ENCODE measurements at regions of chr1 and their contacts with region 1.

Region 1: GRCh38 chr1:167273027-167273800 is 52.5 kb downstream of the POU2F1 start:
- H3K4me3 Mint-ChIP-seq: no peak overlapping the region
- H3K27ac Mint-ChIP-seq: no peak overlapping the region
- H3K4me1 Mint-ChIP-seq: peaks cover 63% of the 10 kb centered on the region
- H3K27me3 Mint-ChIP-seq: no peaks in the 10 kb centered on the region

Region 2: DNA sequence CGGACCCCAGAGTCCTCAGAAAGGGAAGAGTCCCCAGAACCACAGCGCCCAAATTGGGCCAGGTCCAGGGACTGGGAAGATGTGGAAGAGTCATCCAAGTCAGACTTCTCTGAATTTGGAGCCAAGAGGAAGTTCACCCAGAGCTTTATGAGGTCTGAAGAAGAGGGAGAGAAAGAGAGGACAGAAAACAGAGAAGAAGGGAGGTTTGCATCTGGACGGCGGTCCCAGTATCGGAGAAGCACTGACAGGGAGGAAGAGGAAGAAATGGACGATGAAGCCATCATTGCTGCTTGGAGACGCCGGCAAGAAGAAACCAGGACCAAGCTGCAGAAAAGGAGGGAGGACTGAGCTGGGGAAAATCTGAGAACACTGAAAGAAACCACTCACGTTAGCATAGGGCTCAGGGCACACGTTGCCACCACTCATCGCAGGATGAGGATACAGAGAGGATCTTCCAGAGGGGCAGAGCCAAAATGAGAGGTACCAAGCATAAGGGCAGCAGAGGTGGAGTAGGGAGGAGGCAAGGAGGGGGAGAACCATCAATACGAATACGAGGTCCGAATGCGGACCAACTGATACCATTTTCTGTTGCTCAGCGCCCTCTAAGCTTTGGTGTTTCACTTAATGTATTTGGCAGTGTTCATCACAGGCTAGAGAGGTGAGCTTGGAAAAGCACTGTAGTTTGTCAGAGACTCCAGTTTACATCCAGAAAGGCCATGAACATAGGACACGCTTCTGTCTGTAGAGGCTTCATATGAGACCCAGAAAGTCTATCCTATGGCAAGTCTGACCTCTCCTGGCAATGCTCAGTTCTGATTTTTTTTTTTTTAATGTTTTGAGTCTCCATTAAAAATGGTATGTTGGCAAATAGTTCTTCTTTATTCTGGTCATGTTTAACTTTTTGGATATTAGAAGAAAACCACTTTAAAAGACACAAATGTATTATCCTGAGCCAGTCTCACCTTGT is 144.7 kb before region 1 on chr1:
- intact Hi-C with region 1: no loop called
- H3K4me3 Mint-ChIP-seq: no peak overlapping the region
- H3K27ac Mint-ChIP-seq: no peak overlapping the region
- H3K4me1 Mint-ChIP-seq: peaks cover 6% of the 10 kb centered on the region
- H3K27me3 Mint-ChIP-seq: peaks cover 11% of the 10 kb centered on the region

Region 3: GRCh38 chr1:167344615-167345385 is 71.6 kb after region 1 on chr1:
- intact Hi-C with region 1: loop called (anchors 5 kb)
- H3K4me3 Mint-ChIP-seq: no peak overlapping the region
- H3K27ac Mint-ChIP-seq: no peak overlapping the region
- H3K4me1 Mint-ChIP-seq: peaks cover 10% of the 10 kb centered on the region
- H3K27me3 Mint-ChIP-seq: no peaks in the 10 kb centered on the region

Region 4: GRCh38 chr1:167442124-167442848 is 169.1 kb after region 1 on chr1:
- intact Hi-C with region 1: loop called (anchors 1 kb)
- H3K4me3 Mint-ChIP-seq: no peak overlapping the region
- H3K27ac Mint-ChIP-seq: peak overlapping the region; percentile 54
- H3K4me1 Mint-ChIP-seq: peaks cover 43% of the 10 kb centered on the region
- H3K27me3 Mint-ChIP-seq: peaks cover 27% of the 10 kb centered on the region

Region 5: GRCh38 chr1:167533851-167534300 is 260.7 kb after region 1 on chr1:
- intact Hi-C with region 1: loop called (anchors 5 kb)
- H3K4me3 Mint-ChIP-seq: no peak overlapping the region
- H3K27ac Mint-ChIP-seq: no peak overlapping the region
- H3K4me1 Mint-ChIP-seq: peaks cover 31% of the 10 kb centered on the region
- H3K27me3 Mint-ChIP-seq: no peaks in the 10 kb centered on the region